CD4-positive, alpha-beta T cell (primary cell): ENCODE measurements at regions of chr2 and their contacts with region 1.

Region 1: DNA sequence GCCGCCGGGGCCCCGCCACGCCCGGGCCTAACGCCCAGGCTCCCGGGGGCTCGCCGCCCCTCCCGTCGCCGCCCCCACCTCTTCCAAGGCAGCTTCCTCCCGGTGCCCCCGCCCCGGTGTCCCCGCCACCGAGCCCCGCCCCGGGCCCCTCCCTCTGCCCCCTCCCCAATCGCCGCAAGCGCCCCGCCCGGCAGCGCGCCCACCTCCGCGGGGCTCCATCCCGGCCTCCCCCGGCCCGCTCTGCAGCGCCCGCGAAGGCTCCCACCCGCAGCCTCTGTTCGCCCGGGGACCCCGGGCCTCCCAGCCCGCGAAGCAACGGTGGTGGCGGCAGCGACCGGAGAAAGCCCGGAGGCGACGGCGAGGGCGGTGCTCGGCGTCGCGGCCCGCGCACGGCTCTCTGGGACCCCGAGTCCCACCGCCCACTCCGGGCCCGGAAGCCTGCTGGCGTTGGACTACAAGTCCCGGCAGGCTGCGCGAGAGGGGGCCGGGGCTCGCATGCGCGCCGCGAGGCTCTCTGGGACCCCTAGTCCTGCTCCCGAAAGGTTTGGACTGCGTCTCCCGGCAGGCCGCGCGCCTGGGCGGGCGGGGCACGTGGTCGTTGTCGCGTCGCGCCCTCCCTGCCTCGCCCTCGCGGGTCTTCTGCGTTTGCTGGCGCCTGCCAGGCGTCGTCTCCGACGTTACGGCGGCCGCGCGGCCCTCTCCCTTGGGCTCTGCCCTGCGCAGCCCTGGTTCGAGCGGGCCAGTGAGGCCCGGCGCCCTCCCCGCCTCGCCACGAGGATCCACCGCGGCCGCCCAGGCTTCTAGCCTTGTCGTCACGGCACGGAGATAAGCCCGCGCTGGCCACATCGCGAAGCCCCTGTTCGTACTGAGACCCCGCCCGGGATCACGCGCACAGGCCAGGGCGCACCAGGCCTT is at the start of gene STK25:
- DNase-seq: peak; percentile 94 to 99 (median 98)
- ATAC-seq: peak; percentile 95
- H3K4me3 ChIP-seq: peak within 1 kb of the TSS; percentile 63
- H3K4me3 Mint-ChIP-seq: peak within 1 kb of the TSS; percentile 94
- H3K27ac ChIP-seq: peak within 1 kb of the TSS; percentile 18 to 77
- H3K27ac Mint-ChIP-seq: peak within 1 kb of the TSS; percentile 78
- H3K4me1 ChIP-seq: peaks cover 30% of the 10 kb centered on the region
- H3K4me1 Mint-ChIP-seq: peaks cover 15% of the 10 kb centered on the region
- H3K27me3 ChIP-seq: no peaks in the 10 kb centered on the region
- H3K27me3 Mint-ChIP-seq: no peaks in the 10 kb centered on the region
- CTCF ChIP-seq: no peak
- total RNA-seq, gene STK25: 76.1 to 81.3 TPM

Region 2: GRCh38 chr2:240832205-240832727 is 676.2 kb before region 1 on chr2:
- CTCF ChIA-PET with region 1: no interaction called
- POLR2A ChIA-PET with region 1: no interaction called
- intact Hi-C with region 1: loop called in 1 of 2 experiments (anchors 1 kb)
- DNase-seq: peak; percentile 98 to 100 (median 99)
- ATAC-seq: peak; percentile 91
- H3K4me3 ChIP-seq: peak overlapping the region; percentile 43
- H3K4me3 Mint-ChIP-seq: peak overlapping the region; percentile 38
- H3K27ac ChIP-seq: no peak overlapping the region
- H3K27ac Mint-ChIP-seq: no peak overlapping the region
- H3K4me1 ChIP-seq: peaks cover 14% of the 10 kb centered on the region
- H3K4me1 Mint-ChIP-seq: no peaks in the 10 kb centered on the region
- H3K27me3 ChIP-seq: peaks cover 17 to 26% of the 10 kb centered on the region in 2 experiments
- H3K27me3 Mint-ChIP-seq: peaks cover 36% of the 10 kb centered on the region
- CTCF ChIP-seq: no peak

Region 3: DNA sequence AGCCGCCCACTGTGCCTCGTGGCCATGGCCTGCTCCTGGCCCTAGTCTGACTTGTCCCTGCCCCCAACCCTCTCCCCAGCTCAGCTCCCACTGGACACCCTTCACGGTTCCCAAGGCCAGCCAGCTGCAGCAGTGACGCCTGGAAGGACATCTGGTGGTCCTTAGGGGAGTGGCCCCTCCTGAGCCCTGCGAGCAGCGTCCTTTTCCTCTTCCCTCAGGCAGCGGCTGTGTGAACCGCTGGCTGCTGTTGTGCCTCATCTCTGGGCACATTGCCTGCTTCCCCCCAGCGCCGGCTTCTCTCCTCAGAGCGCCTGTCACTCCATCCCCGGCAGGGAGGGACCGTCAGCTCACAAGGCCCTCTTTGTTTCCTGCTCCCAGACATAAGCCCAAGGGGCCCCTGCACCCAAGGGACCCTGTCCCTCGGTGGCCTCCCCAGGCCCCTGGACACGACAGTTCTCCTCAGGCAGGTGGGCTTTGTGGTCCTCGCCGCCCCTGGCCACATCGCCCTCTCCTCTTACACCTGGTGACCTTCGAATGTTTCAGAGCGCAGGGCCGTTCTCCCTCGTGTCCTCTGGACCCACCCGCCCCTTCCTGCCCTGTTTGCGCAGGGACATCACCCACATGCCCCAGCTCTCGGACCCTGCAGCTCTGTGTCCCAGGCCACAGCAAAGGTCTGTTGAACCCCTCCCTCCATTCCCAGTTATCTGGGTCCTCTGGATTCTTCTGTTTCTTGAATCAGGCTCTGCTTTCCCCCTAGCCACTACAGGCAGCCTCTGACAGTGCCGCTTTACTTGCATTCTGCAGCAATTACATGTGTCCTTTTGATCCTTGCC is 284.3 kb before region 1 on chr2:
- CTCF ChIA-PET with region 1: no interaction called
- POLR2A ChIA-PET with region 1: no interaction called
- intact Hi-C with region 1: no loop called
- DNase-seq: peak in 1 of 14 experiments; percentile 31
- ATAC-seq: no peak
- H3K4me3 ChIP-seq: no peak overlapping the region
- H3K4me3 Mint-ChIP-seq: no peak overlapping the region
- H3K27ac ChIP-seq: no peak overlapping the region
- H3K27ac Mint-ChIP-seq: no peak overlapping the region
- H3K4me1 ChIP-seq: peaks cover 3% of the 10 kb centered on the region
- H3K4me1 Mint-ChIP-seq: peaks cover 7% of the 10 kb centered on the region
- H3K27me3 ChIP-seq: no peaks in the 10 kb centered on the region
- H3K27me3 Mint-ChIP-seq: no peaks in the 10 kb centered on the region
- CTCF ChIP-seq: no peak

Region 4: GRCh38 chr2:241443486-241444223 is 64.8 kb before region 1 on chr2:
- CTCF ChIA-PET with region 1: interaction called, 3 read pairs
- POLR2A ChIA-PET with region 1: interaction called, 4 read pairs
- intact Hi-C with region 1: loop called (anchors 2 to 5 kb)
- DNase-seq: peak; percentile 86 to 94 (median 92)
- ATAC-seq: peak; percentile 81
- H3K4me3 ChIP-seq: no peak overlapping the region
- H3K4me3 Mint-ChIP-seq: peak overlapping the region; percentile 59
- H3K27ac ChIP-seq: no peak overlapping the region
- H3K27ac Mint-ChIP-seq: peak overlapping the region; percentile 74
- H3K4me1 ChIP-seq: peaks cover 27% of the 10 kb centered on the region
- H3K4me1 Mint-ChIP-seq: peaks cover 18% of the 10 kb centered on the region
- H3K27me3 ChIP-seq: peaks cover 46 to 63% of the 10 kb centered on the region in 2 experiments
- H3K27me3 Mint-ChIP-seq: peaks cover 79% of the 10 kb centered on the region
- CTCF ChIP-seq: no peak

Region 5: GRCh38 chr2:241609859-241610793 is 101.6 kb after region 1 on chr2:
- CTCF ChIA-PET with region 1: no interaction called
- POLR2A ChIA-PET with region 1: no interaction called
- intact Hi-C with region 1: loop called (anchors 2 to 10 kb)
- DNase-seq: peak; percentile 82 to 96 (median 89)
- ATAC-seq: peak; percentile 99
- H3K4me3 ChIP-seq: peak overlapping the region; percentile 49
- H3K4me3 Mint-ChIP-seq: peak overlapping the region; percentile 45
- H3K27ac ChIP-seq: no peak overlapping the region
- H3K27ac Mint-ChIP-seq: peak overlapping the region; percentile 77
- H3K4me1 ChIP-seq: peaks cover 24% of the 10 kb centered on the region
- H3K4me1 Mint-ChIP-seq: peaks cover 25% of the 10 kb centered on the region
- H3K27me3 ChIP-seq: no peaks in the 10 kb centered on the region
- H3K27me3 Mint-ChIP-seq: no peaks in the 10 kb centered on the region
- CTCF ChIP-seq: peak; percentile 65

Region 6: GRCh38 chr2:241629762-241630435 is 121.4 kb after region 1 on chr2:
- CTCF ChIA-PET with region 1: no interaction called
- POLR2A ChIA-PET with region 1: no interaction called
- intact Hi-C with region 1: loop called in 1 of 2 experiments (anchors 5 kb)
- DNase-seq: no peak
- ATAC-seq: no peak
- H3K4me3 ChIP-seq: no peak overlapping the region
- H3K4me3 Mint-ChIP-seq: no peak overlapping the region
- H3K27ac ChIP-seq: no peak overlapping the region
- H3K27ac Mint-ChIP-seq: no peak overlapping the region
- H3K4me1 ChIP-seq: no peaks in the 10 kb centered on the region
- H3K4me1 Mint-ChIP-seq: peaks cover 13% of the 10 kb centered on the region
- H3K27me3 ChIP-seq: no peaks in the 10 kb centered on the region
- H3K27me3 Mint-ChIP-seq: no peaks in the 10 kb centered on the region
- CTCF ChIP-seq: no peak

Region 7: GRCh38 chr2:241686649-241687425 is 178.3 kb after region 1 on chr2 and contains the start of gene DTYMK:
- CTCF ChIA-PET with region 1: no interaction called
- POLR2A ChIA-PET with region 1: no interaction called
- intact Hi-C with region 1: loop called in 1 of 2 experiments (anchors 1 kb)
- DNase-seq: peak; percentile 89 to 98 (median 95)
- ATAC-seq: peak; percentile 90
- H3K4me3 ChIP-seq: peak within 1 kb of the TSS; percentile 84
- H3K4me3 Mint-ChIP-seq: peak within 1 kb of the TSS; percentile 95
- H3K27ac ChIP-seq: peak within 1 kb of the TSS; percentile 60 to 85
- H3K27ac Mint-ChIP-seq: peak within 1 kb of the TSS; percentile 84
- H3K4me1 ChIP-seq: peaks cover 37% of the 10 kb centered on the region
- H3K4me1 Mint-ChIP-seq: peaks cover 38% of the 10 kb centered on the region
- H3K27me3 ChIP-seq: no peaks in the 10 kb centered on the region
- H3K27me3 Mint-ChIP-seq: no peaks in the 10 kb centered on the region
- CTCF ChIP-seq: no peak
- total RNA-seq, gene DTYMK: 4.8 to 6.0 TPM